ENCODE measurements at regions of chr15 and their contacts with region 1.

Region 1: GRCh38 chr15:98311566-98312188 is 336.7 kb upstream of the IGF1R start:
- DNase-seq: peak; percentile 43 to 75
- ATAC-seq: peak in 2 of 8 donors; percentile 51
- H3K4me3 ChIP-seq: no peak overlapping the region
- H3K27ac ChIP-seq: no peak overlapping the region
- H3K4me1 ChIP-seq: peaks cover 0 to 3% (median 0%) of the 10 kb centered on the region in 9 donors
- H3K27me3 ChIP-seq: peaks cover 0 to 23% (median 6%) of the 10 kb centered on the region in 7 donors
- CTCF ChIP-seq: peak; percentile 60 to 87 (median 80)

Region 2: GRCh38 chr15:98421419-98422129 is 109.9 kb after region 1 on chr15:
- intact Hi-C with region 1: loop called (anchors 1 to 5 kb)
- DNase-seq: peak; percentile 53 to 73
- ATAC-seq: peak; percentile 76 to 88 (median 86)
- H3K4me3 ChIP-seq: peak overlapping the region in 9 of 10 donors; percentile 19 to 45 (median 24)
- H3K27ac ChIP-seq: no peak overlapping the region
- H3K4me1 ChIP-seq: peaks cover 7 to 18% (median 12%) of the 10 kb centered on the region in 9 donors
- H3K27me3 ChIP-seq: peaks cover 6 to 70% (median 58%) of the 10 kb centered on the region in 7 donors
- CTCF ChIP-seq: peak; percentile 98 to 100 (median 99)

Measured in heart right ventricle (tissue), 16 donors.